ENCODE measurements at regions of chr15 and their contacts with region 1.

Region 1: GRCh38 chr15:42137431-42138261 is 18.8 kb downstream of the PLA2G4F start:
- DNase-seq: peak; percentile 50
- ATAC-seq: peak; percentile 80
- H3K4me3 ChIP-seq: no peak overlapping the region
- H3K27ac ChIP-seq: no peak overlapping the region
- H3K4me1 ChIP-seq: no peaks in the 10 kb centered on the region
- H3K27me3 ChIP-seq: peaks cover 41% of the 10 kb centered on the region
- CTCF ChIP-seq: peak; percentile 67
- POLR2A ChIP-seq: no peak
- RAD21 ChIP-seq: peak; percentile 55

Region 2: GRCh38 chr15:41989259-41989933 is 148.2 kb before region 1 on chr15:
- CTCF ChIA-PET with region 1: no interaction called
- POLR2A ChIA-PET with region 1: no interaction called
- dilution Hi-C with region 1: no loop called
- in situ Hi-C with region 1: no loop called
- intact Hi-C with region 1: loop called (anchors 1 kb)
- DNase-seq: peak; percentile 59
- ATAC-seq: peak; percentile 100
- H3K4me3 ChIP-seq: no peak overlapping the region
- H3K27ac ChIP-seq: no peak overlapping the region
- H3K4me1 ChIP-seq: no peaks in the 10 kb centered on the region
- H3K27me3 ChIP-seq: peaks cover 36% of the 10 kb centered on the region; the same call in 1 of the 2 replicates
- CTCF ChIP-seq: peak; percentile 96
- POLR2A ChIP-seq: no peak
- RAD21 ChIP-seq: peak; percentile 97

Region 3: GRCh38 chr15:41999290-42000285 is 138.1 kb before region 1 on chr15:
- CTCF ChIA-PET with region 1: no interaction called
- POLR2A ChIA-PET with region 1: no interaction called
- dilution Hi-C with region 1: no loop called
- in situ Hi-C with region 1: no loop called
- intact Hi-C with region 1: no loop called
- DNase-seq: no peak
- ATAC-seq: no peak
- H3K4me3 ChIP-seq: no peak overlapping the region
- H3K27ac ChIP-seq: no peak overlapping the region
- H3K4me1 ChIP-seq: no peaks in the 10 kb centered on the region
- H3K27me3 ChIP-seq: peaks cover 68% of the 10 kb centered on the region
- CTCF ChIP-seq: no peak
- POLR2A ChIP-seq: no peak
- RAD21 ChIP-seq: no peak

Region 4: GRCh38 chr15:42066764-42067415 is 70.8 kb before region 1 on chr15:
- CTCF ChIA-PET with region 1: no interaction called
- POLR2A ChIA-PET with region 1: no interaction called
- dilution Hi-C with region 1: no loop called
- in situ Hi-C with region 1: no loop called
- intact Hi-C with region 1: loop called (anchors 1 kb)
- DNase-seq: no peak
- ATAC-seq: no peak
- H3K4me3 ChIP-seq: no peak overlapping the region
- H3K27ac ChIP-seq: no peak overlapping the region
- H3K4me1 ChIP-seq: 0 out of 2 replicates have a peak, but pooled peaks cover 2% of the 10 kb centered on the region
- H3K27me3 ChIP-seq: peaks cover 53% of the 10 kb centered on the region
- CTCF ChIP-seq: no peak
- POLR2A ChIP-seq: no peak
- RAD21 ChIP-seq: no peak

Region 5: GRCh38 chr15:42084460-42085235 is 53.0 kb before region 1 on chr15:
- CTCF ChIA-PET with region 1: interaction called, 4 read pairs
- POLR2A ChIA-PET with region 1: no interaction called
- dilution Hi-C with region 1: no loop called
- in situ Hi-C with region 1: no loop called
- intact Hi-C with region 1: loop called (anchors 5 kb)
- DNase-seq: peak; percentile 37
- ATAC-seq: peak; percentile 99
- H3K4me3 ChIP-seq: no peak overlapping the region
- H3K27ac ChIP-seq: no peak overlapping the region
- H3K4me1 ChIP-seq: no peaks in the 10 kb centered on the region
- H3K27me3 ChIP-seq: peaks cover 81% of the 10 kb centered on the region
- CTCF ChIP-seq: peak; percentile 89
- POLR2A ChIP-seq: no peak
- RAD21 ChIP-seq: peak; percentile 73

Measured in IMR-90 (cell line).